Transverse colon (tissue), 4 donors: ENCODE measurements at regions of chr6 and their contacts with region 1.

Region 1: GRCh38 chr6:130322673-130323268 is 43.0 kb upstream of the TMEM200A start:
- DNase-seq: peak; percentile 43
- H3K4me3 ChIP-seq: no peak overlapping the region
- H3K27ac ChIP-seq: no peak overlapping the region
- H3K4me1 ChIP-seq: peaks cover 0 to 4% (median 0%) of the 10 kb centered on the region in 4 donors
- H3K27me3 ChIP-seq: no peaks in the 10 kb centered on the region
- CTCF ChIP-seq: peak; percentile 83 to 87 (median 86)
- EP300 ChIP-seq: no peak
- POLR2A ChIP-seq: no peak

Region 2: GRCh38 chr6:129818251-129818650 is 504.5 kb before region 1 on chr6:
- in situ Hi-C with region 1: no loop called
- intact Hi-C with region 1: no loop called
- DNase-seq: no peak
- H3K4me3 ChIP-seq: no peak overlapping the region
- H3K27ac ChIP-seq: no peak overlapping the region
- H3K4me1 ChIP-seq: no peaks in the 10 kb centered on the region
- H3K27me3 ChIP-seq: no peaks in the 10 kb centered on the region
- CTCF ChIP-seq: no peak
- EP300 ChIP-seq: no peak
- POLR2A ChIP-seq: no peak

Region 3: GRCh38 chr6:130274007-130274406 is 48.8 kb before region 1 on chr6:
- in situ Hi-C with region 1: no loop called
- intact Hi-C with region 1: loop called (anchors 2 kb)
- DNase-seq: no peak
- H3K4me3 ChIP-seq: no peak overlapping the region
- H3K27ac ChIP-seq: no peak overlapping the region
- H3K4me1 ChIP-seq: no peaks in the 10 kb centered on the region
- H3K27me3 ChIP-seq: no peaks in the 10 kb centered on the region
- CTCF ChIP-seq: no peak
- EP300 ChIP-seq: no peak
- POLR2A ChIP-seq: no peak

Region 4: GRCh38 chr6:130697995-130698535 is 375.3 kb after region 1 on chr6:
- in situ Hi-C with region 1: loop called in 2 of 4 experiments (anchors 5 to 25 kb)
- intact Hi-C with region 1: no loop called
- DNase-seq: peak; percentile 27
- H3K4me3 ChIP-seq: no peak overlapping the region
- H3K27ac ChIP-seq: no peak overlapping the region
- H3K4me1 ChIP-seq: no peaks in the 10 kb centered on the region
- H3K27me3 ChIP-seq: no peaks in the 10 kb centered on the region
- CTCF ChIP-seq: peak; percentile 46 to 66 (median 60)
- EP300 ChIP-seq: no peak
- POLR2A ChIP-seq: no peak

Region 5: DNA sequence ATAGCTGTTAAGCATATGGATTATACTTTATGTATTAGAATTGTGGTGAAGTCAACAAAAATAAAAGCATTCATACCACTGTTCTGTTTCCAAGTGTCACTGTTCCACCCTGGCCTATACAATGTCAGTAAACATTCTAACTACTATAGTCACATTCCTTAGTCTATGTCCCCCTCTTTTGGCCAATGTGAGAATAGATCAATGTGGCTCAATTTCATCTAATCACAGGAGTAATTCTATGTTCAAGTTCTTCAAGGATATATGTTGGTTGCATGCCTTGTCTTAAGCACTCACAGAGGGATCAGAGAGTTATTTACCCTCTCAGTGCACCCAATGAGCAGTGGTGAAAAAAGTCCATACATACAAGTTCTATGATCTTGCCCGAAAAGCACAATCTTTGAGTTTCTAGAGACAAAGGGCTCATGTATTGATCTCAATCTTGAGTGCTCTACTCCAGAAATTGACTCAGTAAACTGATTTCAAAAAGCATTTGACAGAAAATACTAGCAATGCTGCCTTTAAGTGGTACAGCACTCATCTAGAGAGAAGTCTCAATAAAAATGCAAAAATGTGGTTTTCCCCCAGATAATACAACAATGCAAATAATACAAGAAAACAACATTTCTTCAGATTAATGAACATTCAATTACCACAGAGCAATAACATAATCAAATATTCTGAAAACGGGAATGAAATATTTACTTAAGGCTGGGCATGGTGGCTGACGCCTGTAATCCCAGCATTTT is 521.0 kb after region 1 on chr6:
- in situ Hi-C with region 1: loop called in 2 of 4 experiments (anchors 10 kb)
- intact Hi-C with region 1: no loop called
- DNase-seq: no peak
- H3K4me3 ChIP-seq: no peak overlapping the region
- H3K27ac ChIP-seq: no peak overlapping the region
- H3K4me1 ChIP-seq: no peaks in the 10 kb centered on the region
- H3K27me3 ChIP-seq: no peaks in the 10 kb centered on the region
- CTCF ChIP-seq: peak; percentile 22 to 46 (median 34)
- EP300 ChIP-seq: no peak
- POLR2A ChIP-seq: no peak

Region 6: GRCh38 chr6:130872250-130873095 is 549.7 kb after region 1 on chr6:
- in situ Hi-C with region 1: loop called in 2 of 4 experiments (anchors 25 kb)
- intact Hi-C with region 1: loop called (anchors 5 kb)
- DNase-seq: peak; percentile 78
- H3K4me3 ChIP-seq: no peak overlapping the region
- H3K27ac ChIP-seq: no peak overlapping the region
- H3K4me1 ChIP-seq: no peaks in the 10 kb centered on the region
- H3K27me3 ChIP-seq: no peaks in the 10 kb centered on the region
- CTCF ChIP-seq: peak; percentile 65 to 92 (median 86)
- EP300 ChIP-seq: no peak
- POLR2A ChIP-seq: no peak